Right ventricle myocardium superior (tissue), 1 donor: ENCODE measurements at regions of chr1 and their contacts with region 1.

Region 1: GRCh38 chr1:23273450-23274133 is 56.3 kb upstream of the HTR1D start:
- DNase-seq: no peak
- ATAC-seq: no peak

Region 2: GRCh38 chr1:23216771-23217420 is 56.7 kb before region 1 on chr1:
- intact Hi-C with region 1: loop called (anchors 10 kb)
- DNase-seq: no peak
- ATAC-seq: no peak